Naive thymus-derived CD8-positive, alpha-beta T cell (primary cell): ENCODE measurements at regions of chr12 and their contacts with region 1.

Region 1: GRCh38 chr12:68364893-68365725 is 32.9 kb upstream of the MDM1 start:
- DNase-seq: peak; percentile 57 to 92 (median 80)
- ATAC-seq: peak; percentile 91
- H3K4me3 Mint-ChIP-seq: peak overlapping the region; percentile 71 to 88 (median 84)
- H3K27ac Mint-ChIP-seq: peak overlapping the region; percentile 91 to 99 (median 97)
- H3K4me1 Mint-ChIP-seq: peaks cover 32 to 79% (median 68%) of the 10 kb centered on the region in 4 donors
- H3K27me3 Mint-ChIP-seq: no peaks in the 10 kb centered on the region

Region 2: GRCh38 chr12:68538726-68539614 is 173.9 kb after region 1 on chr12:
- POLR2A ChIA-PET with region 1: interaction called, 11 read pairs
- DNase-seq: peak; percentile 15 to 88 (median 66)
- ATAC-seq: peak; percentile 92 to 98
- H3K4me3 Mint-ChIP-seq: peak overlapping the region; percentile 58 to 84 (median 73)
- H3K27ac Mint-ChIP-seq: peak overlapping the region; percentile 84 to 96 (median 92)
- H3K4me1 Mint-ChIP-seq: peaks cover 20 to 63% (median 55%) of the 10 kb centered on the region in 4 donors
- H3K27me3 Mint-ChIP-seq: no peaks in the 10 kb centered on the region

Region 3: GRCh38 chr12:68580911-68581310 is 215.8 kb after region 1 on chr12:
- POLR2A ChIA-PET with region 1: interaction called, 10 read pairs
- DNase-seq: no peak
- ATAC-seq: no peak
- H3K4me3 Mint-ChIP-seq: no peak overlapping the region
- H3K27ac Mint-ChIP-seq: peak overlapping the region in 2 of 10 donors; percentile 13 to 73
- H3K4me1 Mint-ChIP-seq: peaks cover 18 to 71% (median 56%) of the 10 kb centered on the region in 4 donors
- H3K27me3 Mint-ChIP-seq: no peaks in the 10 kb centered on the region